ENCODE measurements at regions of chr15 and their contacts with region 1.

Region 1: GRCh38 chr15:34101366-34102175 is at the starts of genes EMC7 and PGBD4:
- DNase-seq: peak; percentile 98 to 99
- ATAC-seq: peak; percentile 100
- H3K4me3 ChIP-seq: peak within 1 kb of the TSS; percentile 71 to 94 (median 88)
- H3K27ac ChIP-seq: peak within 1 kb of the TSS; percentile 83 to 90 (median 88)
- H3K4me1 ChIP-seq: peaks cover 26 to 28% of the 10 kb centered on the region in 2 donors
- H3K27me3 ChIP-seq: no peaks in the 10 kb centered on the region
- CTCF ChIP-seq: peak in 1 of 5 experiments; percentile 27
- POLR2A ChIP-seq: peak; percentile 84 to 89
- total RNA-seq, gene EMC7: 36.6 to 66.8 (median 48.3) TPM
- total RNA-seq, gene PGBD4: 0.73 to 1.9 (median 1.2) TPM

Region 2: DNA sequence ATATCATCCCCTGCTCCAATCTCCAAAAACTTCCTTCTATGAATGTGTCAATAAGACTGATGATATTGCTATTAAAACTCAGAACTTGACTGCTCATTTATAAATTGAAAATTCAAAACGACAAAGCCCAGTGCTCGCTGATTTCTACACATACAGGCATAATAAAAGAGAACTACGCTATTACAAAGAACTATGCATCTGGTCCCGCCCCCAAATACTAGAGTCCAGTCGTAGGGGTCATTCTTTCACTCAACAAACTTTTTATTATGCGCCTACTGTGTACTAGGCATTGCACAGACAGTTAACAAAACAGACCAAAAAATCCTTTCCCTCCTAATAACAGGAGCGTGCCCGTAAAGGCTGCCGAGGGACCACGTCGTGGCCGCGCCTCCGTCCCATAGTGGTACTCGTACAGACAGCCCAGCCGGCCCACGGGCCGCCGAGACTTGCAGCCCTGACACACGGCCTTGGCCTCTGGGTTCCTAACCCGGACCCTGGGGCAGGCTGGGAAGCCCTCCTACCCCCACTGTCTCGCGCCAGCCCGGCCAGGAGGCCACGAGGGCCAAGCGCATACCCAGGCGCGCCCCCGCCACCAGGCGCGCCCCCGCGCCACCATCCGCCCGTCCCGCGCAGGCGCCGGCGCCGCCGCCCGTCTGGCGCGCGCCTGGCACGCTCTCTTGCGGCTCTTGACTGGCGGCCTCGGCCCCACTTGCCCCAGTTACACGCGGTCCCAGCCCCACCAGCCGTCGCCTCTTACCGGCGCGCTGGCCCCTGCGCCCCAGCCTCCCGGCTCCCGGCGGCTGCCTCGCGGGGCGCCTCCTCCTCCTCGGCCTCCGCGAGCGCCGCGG is 63.3 kb before region 1 on chr15:
- in situ Hi-C with region 1: loop called in 1 of 4 experiments (anchors 10 kb)
- intact Hi-C with region 1: loop called (anchors 2 kb)
- DNase-seq: peak; percentile 59 to 80
- ATAC-seq: peak; percentile 93 to 95
- H3K4me3 ChIP-seq: peak overlapping the region; percentile 78 to 88 (median 82)
- H3K27ac ChIP-seq: peak overlapping the region; percentile 87 to 93 (median 89)
- H3K4me1 ChIP-seq: peaks cover 10 to 14% of the 10 kb centered on the region in 2 donors
- H3K27me3 ChIP-seq: no peaks in the 10 kb centered on the region
- CTCF ChIP-seq: no peak
- POLR2A ChIP-seq: peak; percentile 70 to 72

Region 3: GRCh38 chr15:34049112-34049511 is 52.5 kb before region 1 on chr15:
- in situ Hi-C with region 1: loop called in 1 of 4 experiments (anchors 10 kb)
- intact Hi-C with region 1: no loop called
- DNase-seq: no peak
- ATAC-seq: no peak
- H3K4me3 ChIP-seq: no peak overlapping the region
- H3K27ac ChIP-seq: no peak overlapping the region
- H3K4me1 ChIP-seq: no peaks in the 10 kb centered on the region
- H3K27me3 ChIP-seq: no peaks in the 10 kb centered on the region
- CTCF ChIP-seq: no peak
- POLR2A ChIP-seq: no peak

Region 4: DNA sequence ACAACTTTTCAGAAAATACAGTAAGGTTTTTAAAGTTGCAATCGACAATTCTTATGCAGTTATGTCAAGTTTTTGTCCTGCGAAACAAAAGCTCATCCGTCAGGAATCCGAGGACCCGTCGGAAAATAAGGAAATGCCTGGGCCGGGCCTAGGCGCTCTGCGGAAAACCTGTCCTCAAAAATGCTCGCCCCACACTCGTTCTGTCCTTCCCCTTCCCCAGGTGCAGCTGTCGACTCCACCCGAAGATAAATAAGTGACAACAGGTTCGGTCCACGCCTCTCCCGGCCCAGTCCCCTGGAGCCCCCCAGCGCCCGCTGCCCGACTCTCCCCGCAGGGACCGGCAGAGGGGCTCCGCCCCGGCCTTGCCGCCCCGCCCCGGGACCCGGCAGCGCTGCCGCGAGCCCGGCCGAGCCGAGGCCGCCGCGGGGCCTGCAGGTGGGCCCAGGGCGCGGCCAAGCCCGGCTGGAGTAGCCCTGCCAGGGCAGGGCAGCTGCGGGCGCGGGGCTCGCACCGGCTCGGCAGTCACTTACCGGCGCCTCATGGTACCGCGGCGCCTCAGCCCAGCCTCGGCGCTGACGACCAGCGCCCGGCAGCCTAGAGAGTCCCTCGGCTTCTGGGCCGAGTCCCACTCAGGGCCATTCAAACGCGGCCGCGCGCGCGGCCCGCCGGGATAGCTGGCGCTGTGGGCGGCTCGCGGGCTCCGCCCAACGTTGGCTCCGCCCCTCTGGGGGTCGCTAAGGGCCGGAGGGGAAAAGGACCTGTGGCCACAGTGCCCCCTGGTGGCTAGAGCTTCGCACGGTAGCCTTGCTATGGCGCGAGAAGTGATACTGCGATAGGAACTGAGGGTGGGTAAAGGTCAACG is 108.1 kb after region 1 on chr15 and contains the start of gene KATNBL1:
- in situ Hi-C with region 1: no loop called
- intact Hi-C with region 1: loop called (anchors 1 kb)
- DNase-seq: peak; percentile 88 to 93
- ATAC-seq: peak; percentile 96 to 98
- H3K4me3 ChIP-seq: peak within 1 kb of the TSS; percentile 58 to 73 (median 69)
- H3K27ac ChIP-seq: peak within 1 kb of the TSS; percentile 3 to 84 (median 75)
- H3K4me1 ChIP-seq: peaks cover 12% of the 10 kb centered on the region in 2 donors
- H3K27me3 ChIP-seq: no peaks in the 10 kb centered on the region
- CTCF ChIP-seq: peak; percentile 92 to 96 (median 96)
- POLR2A ChIP-seq: peak; percentile 63 to 92
- total RNA-seq, gene KATNBL1: 9.2 to 24.9 (median 12.3) TPM

Region 5: GRCh38 chr15:34223904-34224596 is 122.5 kb after region 1 on chr15:
- in situ Hi-C with region 1: loop called (anchors 5 to 10 kb)
- intact Hi-C with region 1: loop called (anchors 1 kb)
- DNase-seq: no peak
- ATAC-seq: peak; percentile 34 to 45
- H3K4me3 ChIP-seq: peak overlapping the region; percentile 75 to 93 (median 86)
- H3K27ac ChIP-seq: peak overlapping the region; percentile 83 to 96 (median 87)
- H3K4me1 ChIP-seq: peaks cover 14 to 15% of the 10 kb centered on the region in 2 donors
- H3K27me3 ChIP-seq: no peaks in the 10 kb centered on the region
- CTCF ChIP-seq: no peak
- POLR2A ChIP-seq: no peak

Region 6: GRCh38 chr15:34337557-34338306 is 236.2 kb after region 1 on chr15 and contains the start of gene SLC12A6:
- in situ Hi-C with region 1: loop called in 1 of 4 experiments (anchors 10 kb)
- intact Hi-C with region 1: loop called (anchors 5 kb)
- DNase-seq: peak; percentile 84 to 90
- ATAC-seq: peak; percentile 93 to 94
- H3K4me3 ChIP-seq: peak within 1 kb of the TSS; percentile 75 to 91 (median 86)
- H3K27ac ChIP-seq: peak within 1 kb of the TSS; percentile 90 to 96 (median 92)
- H3K4me1 ChIP-seq: peaks cover 43 to 44% of the 10 kb centered on the region in 2 donors
- H3K27me3 ChIP-seq: no peaks in the 10 kb centered on the region
- CTCF ChIP-seq: no peak
- POLR2A ChIP-seq: peak; percentile 70 to 86
- total RNA-seq, gene SLC12A6: 17.3 to 25.4 (median 19.5) TPM

Region 7: GRCh38 chr15:34587717-34588674 is 486.4 kb after region 1 on chr15:
- in situ Hi-C with region 1: no loop called
- intact Hi-C with region 1: loop called (anchors 10 kb)
- DNase-seq: peak in 1 of 2 donors; percentile 33
- ATAC-seq: peak; percentile 70 to 73
- H3K4me3 ChIP-seq: peak overlapping the region; percentile 22 to 40 (median 30)
- H3K27ac ChIP-seq: no peak overlapping the region
- H3K4me1 ChIP-seq: peaks cover 4 to 6% of the 10 kb centered on the region in 2 donors
- H3K27me3 ChIP-seq: no peaks in the 10 kb centered on the region
- CTCF ChIP-seq: peak; percentile 58 to 79 (median 73)
- POLR2A ChIP-seq: no peak

Measured in gastrocnemius medialis (tissue), 4 donors.